ENCODE measurements at regions of chr1 and their contacts with region 1.

Region 1: GRCh38 chr1:167059045-167059808 is 30.9 kb downstream of the GPA33 start:
- DNase-seq: peak; percentile 89
- H3K4me3 Mint-ChIP-seq: no peak overlapping the region
- H3K27ac Mint-ChIP-seq: peak overlapping the region; percentile 38
- H3K4me1 Mint-ChIP-seq: peaks cover 11% of the 10 kb centered on the region
- H3K27me3 Mint-ChIP-seq: no peaks in the 10 kb centered on the region

Region 2: GRCh38 chr1:165928075-165928731 is 1131.0 kb before region 1 on chr1:
- CTCF ChIA-PET with region 1: no interaction called
- intact Hi-C with region 1: loop called (anchors 5 kb)
- DNase-seq: peak; percentile 75
- H3K4me3 Mint-ChIP-seq: no peak overlapping the region
- H3K27ac Mint-ChIP-seq: no peak overlapping the region
- H3K4me1 Mint-ChIP-seq: peaks cover 2% of the 10 kb centered on the region
- H3K27me3 Mint-ChIP-seq: peaks cover 23% of the 10 kb centered on the region

Region 3: GRCh38 chr1:166875734-166876539 is 183.3 kb before region 1 on chr1 and contains the start of gene TADA1:
- CTCF ChIA-PET with region 1: interaction called, 84 read pairs
- intact Hi-C with region 1: loop called (anchors 2 kb)
- DNase-seq: peak; percentile 100
- H3K4me3 Mint-ChIP-seq: peak within 1 kb of the TSS; percentile 99
- H3K27ac Mint-ChIP-seq: peak within 1 kb of the TSS; percentile 97
- H3K4me1 Mint-ChIP-seq: peaks cover 37% of the 10 kb centered on the region
- H3K27me3 Mint-ChIP-seq: no peaks in the 10 kb centered on the region
- total RNA-seq, gene TADA1: 19.6 to 19.9 TPM

Region 4: DNA sequence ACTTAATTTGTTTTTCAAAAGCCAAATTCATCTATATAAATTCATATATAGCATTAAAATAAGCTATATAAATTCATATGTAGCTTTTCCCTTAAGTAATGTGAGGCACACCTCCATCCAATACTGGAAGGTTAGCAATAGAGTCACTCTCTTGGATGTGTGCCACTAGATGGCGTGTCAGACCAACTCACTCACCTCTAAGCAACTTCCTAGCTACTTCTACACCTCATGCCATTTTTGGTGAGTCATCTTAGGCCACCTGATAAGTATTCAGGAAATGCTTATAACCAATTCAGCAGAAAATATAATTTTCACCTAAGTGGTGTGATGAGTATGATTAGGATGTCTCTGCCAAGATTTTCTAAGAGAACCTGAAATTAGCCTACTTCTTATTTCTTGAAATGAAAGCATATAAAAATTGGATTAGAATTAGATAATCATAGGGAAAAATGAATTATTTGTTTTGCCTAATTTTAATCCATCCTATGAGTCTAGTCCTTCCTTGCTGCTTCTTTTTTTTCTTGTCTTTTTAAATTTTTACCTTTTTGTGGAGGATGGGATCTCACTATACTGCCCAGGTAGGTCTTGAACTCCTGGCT is 148.7 kb before region 1 on chr1:
- CTCF ChIA-PET with region 1: interaction called, 635 read pairs
- intact Hi-C with region 1: loop called (anchors 1 kb)
- DNase-seq: peak; percentile 90
- H3K4me3 Mint-ChIP-seq: no peak overlapping the region
- H3K27ac Mint-ChIP-seq: no peak overlapping the region
- H3K4me1 Mint-ChIP-seq: peaks cover 5% of the 10 kb centered on the region
- H3K27me3 Mint-ChIP-seq: no peaks in the 10 kb centered on the region

Region 5: DNA sequence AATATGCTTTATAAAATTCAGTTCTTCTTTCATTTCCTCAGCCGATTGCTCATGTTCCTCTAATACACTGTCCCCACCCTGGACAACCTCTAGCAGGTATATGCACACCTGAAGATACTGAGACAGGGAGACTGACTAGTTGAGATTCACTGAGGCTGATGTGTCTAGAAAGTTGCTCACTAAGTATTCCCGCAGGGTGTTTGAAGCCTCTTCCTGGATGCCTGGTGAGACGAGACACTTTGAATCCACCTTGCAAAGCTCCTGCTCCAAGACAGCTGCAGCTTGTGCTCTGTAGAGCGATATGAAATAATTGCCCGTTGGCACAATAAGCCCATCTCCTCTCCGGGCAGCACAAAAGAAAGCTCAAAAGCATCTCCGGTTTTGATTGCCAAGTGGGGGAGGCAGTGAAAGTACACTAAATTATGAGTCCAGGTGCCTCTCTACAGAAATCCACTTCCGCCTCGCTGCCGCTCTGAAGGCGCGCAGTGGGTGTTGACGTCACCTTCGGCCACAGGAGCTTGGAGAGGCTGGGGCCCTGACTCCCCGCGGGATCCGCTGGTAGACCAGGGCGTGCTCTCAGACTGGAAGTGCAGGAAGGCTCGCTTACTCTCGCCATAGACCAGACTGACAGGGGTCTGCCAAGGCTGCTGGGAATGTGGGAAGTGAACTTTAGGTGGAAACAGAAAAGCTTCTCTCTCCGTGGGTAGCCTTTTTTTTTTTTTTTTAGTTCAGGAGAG is 15.3 kb before region 1 on chr1:
- CTCF ChIA-PET with region 1: interaction called, 29 read pairs
- intact Hi-C with region 1: no loop called
- DNase-seq: peak; percentile 88
- H3K4me3 Mint-ChIP-seq: peak overlapping the region; percentile 75
- H3K27ac Mint-ChIP-seq: peak overlapping the region; percentile 67
- H3K4me1 Mint-ChIP-seq: peaks cover 16% of the 10 kb centered on the region
- H3K27me3 Mint-ChIP-seq: peaks cover 3% of the 10 kb centered on the region

Region 6: DNA sequence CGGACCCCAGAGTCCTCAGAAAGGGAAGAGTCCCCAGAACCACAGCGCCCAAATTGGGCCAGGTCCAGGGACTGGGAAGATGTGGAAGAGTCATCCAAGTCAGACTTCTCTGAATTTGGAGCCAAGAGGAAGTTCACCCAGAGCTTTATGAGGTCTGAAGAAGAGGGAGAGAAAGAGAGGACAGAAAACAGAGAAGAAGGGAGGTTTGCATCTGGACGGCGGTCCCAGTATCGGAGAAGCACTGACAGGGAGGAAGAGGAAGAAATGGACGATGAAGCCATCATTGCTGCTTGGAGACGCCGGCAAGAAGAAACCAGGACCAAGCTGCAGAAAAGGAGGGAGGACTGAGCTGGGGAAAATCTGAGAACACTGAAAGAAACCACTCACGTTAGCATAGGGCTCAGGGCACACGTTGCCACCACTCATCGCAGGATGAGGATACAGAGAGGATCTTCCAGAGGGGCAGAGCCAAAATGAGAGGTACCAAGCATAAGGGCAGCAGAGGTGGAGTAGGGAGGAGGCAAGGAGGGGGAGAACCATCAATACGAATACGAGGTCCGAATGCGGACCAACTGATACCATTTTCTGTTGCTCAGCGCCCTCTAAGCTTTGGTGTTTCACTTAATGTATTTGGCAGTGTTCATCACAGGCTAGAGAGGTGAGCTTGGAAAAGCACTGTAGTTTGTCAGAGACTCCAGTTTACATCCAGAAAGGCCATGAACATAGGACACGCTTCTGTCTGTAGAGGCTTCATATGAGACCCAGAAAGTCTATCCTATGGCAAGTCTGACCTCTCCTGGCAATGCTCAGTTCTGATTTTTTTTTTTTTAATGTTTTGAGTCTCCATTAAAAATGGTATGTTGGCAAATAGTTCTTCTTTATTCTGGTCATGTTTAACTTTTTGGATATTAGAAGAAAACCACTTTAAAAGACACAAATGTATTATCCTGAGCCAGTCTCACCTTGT is 69.3 kb after region 1 on chr1:
- CTCF ChIA-PET with region 1: interaction called, 15 read pairs
- intact Hi-C with region 1: no loop called
- DNase-seq: no peak
- H3K4me3 Mint-ChIP-seq: no peak overlapping the region
- H3K27ac Mint-ChIP-seq: no peak overlapping the region
- H3K4me1 Mint-ChIP-seq: no peaks in the 10 kb centered on the region
- H3K27me3 Mint-ChIP-seq: peaks cover 11% of the 10 kb centered on the region